AG04450 (cell line): ENCODE measurements at regions of chrX and their contacts with region 1.

Region 1: GRCh38 chrX:115642895-115643530 is 82.0 kb downstream of the PLS3 start:
- DNase-seq: peak; percentile 51
- H3K4me3 ChIP-seq: no peak overlapping the region
- H3K27ac ChIP-seq: no peak overlapping the region
- H3K27me3 ChIP-seq: no peaks in the 10 kb centered on the region
- CTCF ChIP-seq: peak; percentile 75

Region 2: DNA sequence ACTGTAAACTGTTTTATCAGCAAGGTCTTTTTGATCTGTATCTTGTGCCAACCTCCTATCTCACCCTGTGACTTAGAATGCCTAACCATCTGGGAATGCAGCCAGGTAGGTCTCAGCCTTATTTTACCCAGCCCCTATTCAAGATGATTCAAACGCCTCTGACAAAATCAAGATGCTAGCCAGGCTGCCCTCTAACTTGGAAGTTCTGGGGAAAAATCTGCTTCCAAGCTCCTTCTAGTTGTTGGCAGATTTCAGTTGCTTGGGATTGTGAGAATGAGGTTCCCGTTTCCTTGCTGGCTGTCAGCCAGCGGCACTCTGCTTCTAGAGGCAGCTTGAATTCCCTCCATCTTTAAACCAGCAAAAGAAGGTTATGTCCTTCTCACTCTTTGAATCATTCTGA is 318.8 kb before region 1 on chrX:
- CTCF ChIA-PET with region 1: interaction called, 68 read pairs
- POLR2A ChIA-PET with region 1: no interaction called
- DNase-seq: no peak
- H3K4me3 ChIP-seq: no peak overlapping the region
- H3K27ac ChIP-seq: no peak overlapping the region
- H3K27me3 ChIP-seq: no peaks in the 10 kb centered on the region
- CTCF ChIP-seq: no peak

Region 3: DNA sequence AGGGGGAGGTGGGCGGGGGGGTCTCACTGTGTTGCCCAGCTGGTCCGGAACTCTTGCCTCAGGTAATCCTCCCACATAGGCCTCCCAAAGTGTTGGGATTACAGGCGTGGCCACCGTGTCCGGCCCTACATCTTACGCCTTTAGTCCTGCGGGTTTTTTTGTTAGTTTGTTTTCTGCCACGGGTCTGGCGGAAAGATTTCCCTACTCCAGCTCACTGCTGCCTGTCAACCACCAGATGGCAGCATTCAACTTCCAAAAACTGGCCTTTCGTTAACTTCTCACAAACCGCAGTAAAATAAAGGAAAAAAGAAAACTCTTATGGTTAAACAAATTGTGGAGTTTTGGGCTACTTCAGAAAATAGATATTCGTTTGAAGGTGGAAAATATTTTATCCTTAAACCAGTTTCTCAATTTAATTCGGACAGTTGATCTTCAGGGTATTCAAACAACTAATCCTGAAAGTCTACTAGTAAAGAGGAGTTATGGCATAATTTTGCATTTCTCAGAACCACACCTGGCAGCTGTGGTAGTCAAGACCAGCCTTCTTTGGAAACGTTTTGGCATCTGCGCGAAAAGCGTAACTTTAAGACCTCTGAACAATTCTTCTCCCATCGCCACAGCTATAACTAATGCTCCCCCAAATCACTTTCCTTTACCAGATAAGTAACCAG is 312.4 kb before region 1 on chrX:
- CTCF ChIA-PET with region 1: interaction called, 68 read pairs
- POLR2A ChIA-PET with region 1: no interaction called
- DNase-seq: no peak
- H3K4me3 ChIP-seq: peak overlapping the region; percentile 39
- H3K27ac ChIP-seq: no peak overlapping the region
- H3K27me3 ChIP-seq: no peaks in the 10 kb centered on the region
- CTCF ChIP-seq: peak; percentile 68

Region 4: DNA sequence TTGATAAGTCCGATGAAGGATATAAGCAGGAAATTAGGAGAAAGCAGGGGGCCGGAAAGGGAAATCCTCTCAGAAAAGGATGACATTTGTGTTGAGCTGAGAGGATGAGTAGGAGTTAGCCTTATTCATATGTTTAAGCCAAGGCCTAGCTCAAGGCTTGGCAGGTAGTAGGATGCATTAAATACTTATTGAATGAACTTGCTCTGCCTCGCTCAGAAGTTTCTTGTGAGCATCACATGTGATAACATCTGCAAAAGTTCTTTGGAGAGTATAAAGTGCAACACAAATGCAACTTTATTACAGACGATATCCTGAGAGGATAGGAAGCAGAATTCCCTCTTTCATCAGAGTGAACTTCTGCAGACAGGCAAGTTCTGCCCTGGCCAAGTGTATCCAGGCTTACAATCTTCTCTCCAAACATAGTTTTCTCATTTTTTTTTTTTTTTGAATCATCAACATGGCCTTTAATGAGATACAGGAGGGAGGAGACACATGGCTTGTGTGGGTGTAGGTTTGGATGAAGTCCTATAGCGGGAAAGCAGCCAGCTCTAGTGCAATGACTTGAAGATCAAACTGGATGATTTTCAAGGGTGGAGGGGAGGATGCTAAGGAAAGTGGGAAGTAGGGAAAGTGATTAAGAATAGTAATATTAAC is 305.4 kb before region 1 on chrX:
- CTCF ChIA-PET with region 1: interaction called, 68 read pairs
- POLR2A ChIA-PET with region 1: no interaction called
- DNase-seq: peak; percentile 42
- H3K4me3 ChIP-seq: no peak overlapping the region
- H3K27ac ChIP-seq: no peak overlapping the region
- H3K27me3 ChIP-seq: no peaks in the 10 kb centered on the region
- CTCF ChIP-seq: no peak

Region 5: GRCh38 chrX:115625572-115626301 is 17.3 kb before region 1 on chrX:
- CTCF ChIA-PET with region 1: interaction called, 21 read pairs
- POLR2A ChIA-PET with region 1: no interaction called
- DNase-seq: no peak
- H3K4me3 ChIP-seq: no peak overlapping the region
- H3K27ac ChIP-seq: peak overlapping the region; percentile 52
- H3K27me3 ChIP-seq: no peaks in the 10 kb centered on the region
- CTCF ChIP-seq: no peak

Region 6: GRCh38 chrX:115632455-115632854 is 10.6 kb before region 1 on chrX:
- CTCF ChIA-PET with region 1: interaction called, 21 read pairs
- POLR2A ChIA-PET with region 1: no interaction called
- DNase-seq: no peak
- H3K4me3 ChIP-seq: no peak overlapping the region
- H3K27ac ChIP-seq: peak overlapping the region; percentile 65
- H3K27me3 ChIP-seq: no peaks in the 10 kb centered on the region
- CTCF ChIP-seq: no peak